ENCODE measurements at regions of chr20 and their contacts with region 1.

Region 1: DNA sequence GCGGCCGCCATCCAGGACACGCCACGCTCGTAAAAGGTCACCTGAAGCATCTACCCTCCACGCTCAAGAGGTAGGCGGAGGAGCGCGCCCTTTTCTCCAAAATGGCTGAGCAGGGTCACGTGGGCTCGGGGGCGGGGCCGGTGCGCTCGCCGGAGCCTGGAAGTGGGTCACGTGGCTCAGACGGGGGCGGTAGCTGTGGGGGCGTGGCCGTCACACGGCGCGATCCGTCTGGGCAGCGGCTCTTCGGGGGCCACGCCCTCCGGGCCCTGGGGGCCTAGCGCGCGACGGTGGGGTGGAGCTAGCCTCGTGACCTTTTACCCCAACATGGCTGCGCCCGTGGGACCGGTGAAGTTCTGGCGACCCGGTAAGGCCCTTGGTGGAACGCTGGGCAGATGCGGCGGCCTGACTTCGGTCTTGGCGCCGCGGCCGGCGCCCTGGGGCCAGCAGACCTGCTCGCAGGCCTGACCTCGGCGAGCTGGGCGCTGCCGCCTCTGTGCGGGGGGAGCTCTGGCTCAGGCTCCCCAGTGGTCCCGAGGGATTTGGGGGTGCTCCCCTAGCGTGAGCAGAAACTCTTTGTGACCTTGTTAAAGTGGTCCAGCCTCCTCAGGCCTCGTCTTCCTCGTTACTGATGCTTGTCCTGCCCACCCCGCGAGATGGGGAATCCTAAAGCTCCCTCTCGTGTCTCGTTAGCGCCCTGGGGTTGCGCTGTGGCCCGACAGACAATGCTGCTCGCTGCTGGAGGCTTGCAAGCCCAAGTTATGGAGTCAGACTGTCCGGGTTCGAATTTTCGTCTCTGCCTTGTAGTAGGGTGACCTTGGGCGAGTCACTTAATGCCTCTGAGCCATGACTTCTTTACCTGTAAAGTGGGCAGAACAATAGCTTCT is at the start of gene DHX35:
- DNase-seq: peak; percentile 99
- H3K4me3 Mint-ChIP-seq: peak within 1 kb of the TSS; percentile 88
- H3K27ac Mint-ChIP-seq: peak within 1 kb of the TSS; percentile 80
- H3K4me1 Mint-ChIP-seq: peaks cover 31% of the 10 kb centered on the region
- H3K27me3 Mint-ChIP-seq: no peaks in the 10 kb centered on the region
- total RNA-seq, gene DHX35: 7.1 to 7.2 TPM

Region 2: DNA sequence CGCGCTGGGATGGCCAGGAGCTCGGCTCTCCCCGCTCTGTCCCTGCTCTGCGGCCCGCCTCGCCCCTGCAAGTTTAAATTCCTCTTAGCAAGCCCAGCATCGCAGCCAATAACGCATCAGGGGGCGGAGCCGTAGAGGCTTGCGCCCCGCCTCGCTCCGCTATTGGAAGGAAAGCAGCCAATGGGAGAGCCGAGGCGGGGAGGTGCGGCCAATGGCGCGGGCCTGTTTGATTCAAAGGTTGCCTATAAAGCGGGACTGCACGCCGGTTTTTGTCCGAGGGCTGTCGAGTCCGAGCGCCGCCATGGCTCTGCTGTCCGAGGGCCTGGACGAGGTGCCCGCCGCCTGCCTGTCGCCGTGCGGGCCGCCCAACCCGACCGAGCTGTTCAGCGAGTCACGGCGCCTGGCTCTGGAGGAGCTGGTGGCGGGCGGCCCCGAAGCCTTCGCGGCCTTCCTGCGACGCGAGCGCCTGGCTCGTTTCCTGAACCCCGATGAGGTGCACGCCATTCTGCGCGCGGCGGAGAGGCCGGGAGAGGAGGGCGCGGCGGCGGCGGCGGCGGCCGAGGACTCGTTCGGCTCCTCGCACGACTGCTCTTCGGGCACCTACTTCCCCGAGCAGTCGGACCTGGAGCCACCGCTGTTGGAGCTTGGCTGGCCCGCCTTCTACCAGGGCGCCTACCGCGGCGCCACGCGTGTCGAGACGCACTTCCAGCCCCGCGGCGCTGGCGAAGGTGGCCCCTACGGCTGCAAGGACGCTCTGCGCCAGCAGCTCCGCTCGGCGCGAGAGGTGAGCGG is 35.9 kb before region 1 on chr20 and contains the start of gene FAM83D:
- CTCF ChIA-PET with region 1: interaction called, 50 read pairs
- POLR2A ChIA-PET with region 1: interaction called, 65 read pairs
- DNase-seq: peak; percentile 98
- H3K4me3 Mint-ChIP-seq: peak within 1 kb of the TSS; percentile 81
- H3K27ac Mint-ChIP-seq: peak within 1 kb of the TSS; percentile 62
- H3K4me1 Mint-ChIP-seq: peaks cover 40% of the 10 kb centered on the region
- H3K27me3 Mint-ChIP-seq: no peaks in the 10 kb centered on the region
- total RNA-seq, gene FAM83D: 18.9 to 19.9 TPM

Region 3: GRCh38 chr20:38979842-38980241 is 17.6 kb after region 1 on chr20:
- CTCF ChIA-PET with region 1: interaction called, 3 read pairs
- POLR2A ChIA-PET with region 1: interaction called, 16 read pairs
- DNase-seq: no peak
- H3K4me3 Mint-ChIP-seq: no peak overlapping the region
- H3K27ac Mint-ChIP-seq: no peak overlapping the region
- H3K4me1 Mint-ChIP-seq: peaks cover 10% of the 10 kb centered on the region
- H3K27me3 Mint-ChIP-seq: no peaks in the 10 kb centered on the region

Region 4: DNA sequence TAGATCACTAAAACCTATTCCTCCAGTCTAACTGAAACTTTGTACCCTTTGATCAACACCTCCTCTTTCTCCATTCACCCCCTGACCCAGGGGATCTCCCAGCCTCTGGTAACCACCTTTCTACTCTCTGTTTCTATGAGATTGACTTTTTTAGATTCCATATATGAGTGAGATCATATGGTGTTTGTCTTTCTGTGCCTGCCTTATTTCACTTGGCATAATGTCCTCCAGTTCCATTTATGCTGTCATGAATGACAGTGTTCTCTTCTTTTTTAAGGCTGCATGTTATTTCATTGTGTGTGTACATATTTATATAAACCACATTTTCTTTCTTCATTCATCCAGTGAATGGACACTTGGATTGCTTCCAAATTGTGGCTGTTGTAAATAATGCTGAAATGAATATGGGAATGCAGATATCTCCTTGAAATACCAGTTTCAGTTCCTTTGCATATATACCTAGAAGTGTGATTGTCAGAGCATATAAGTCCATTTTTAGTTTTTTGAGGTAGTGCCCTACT is 57.6 kb after region 1 on chr20:
- CTCF ChIA-PET with region 1: interaction called, 5 read pairs
- POLR2A ChIA-PET with region 1: interaction called, 11 read pairs
- DNase-seq: no peak
- H3K4me3 Mint-ChIP-seq: no peak overlapping the region
- H3K27ac Mint-ChIP-seq: no peak overlapping the region
- H3K4me1 Mint-ChIP-seq: peaks cover 75% of the 10 kb centered on the region
- H3K27me3 Mint-ChIP-seq: no peaks in the 10 kb centered on the region